Calu3 (cell line): ENCODE measurements at regions of chr11 and their contacts with region 1.

Region 1: GRCh38 chr11:34791780-34792542 is 124.2 kb downstream of the APIP start:
- DNase-seq: no peak
- H3K4me3 Mint-ChIP-seq: no peak overlapping the region
- H3K27ac Mint-ChIP-seq: peak overlapping the region; percentile 66
- H3K4me1 Mint-ChIP-seq: peaks cover 67% of the 10 kb centered on the region
- H3K27me3 Mint-ChIP-seq: no peaks in the 10 kb centered on the region
- CTCF ChIP-seq: peak; percentile 24

Region 2: GRCh38 chr11:34825670-34826383 is 33.9 kb after region 1 on chr11:
- CTCF ChIA-PET with region 1: interaction called, 21 read pairs
- intact Hi-C with region 1: loop called (anchors 1 kb)
- DNase-seq: peak; percentile 90
- H3K4me3 Mint-ChIP-seq: peak overlapping the region; percentile 47
- H3K27ac Mint-ChIP-seq: peak overlapping the region; percentile 96
- H3K4me1 Mint-ChIP-seq: peaks cover 68% of the 10 kb centered on the region
- H3K27me3 Mint-ChIP-seq: no peaks in the 10 kb centered on the region
- CTCF ChIP-seq: no peak

Region 3: DNA sequence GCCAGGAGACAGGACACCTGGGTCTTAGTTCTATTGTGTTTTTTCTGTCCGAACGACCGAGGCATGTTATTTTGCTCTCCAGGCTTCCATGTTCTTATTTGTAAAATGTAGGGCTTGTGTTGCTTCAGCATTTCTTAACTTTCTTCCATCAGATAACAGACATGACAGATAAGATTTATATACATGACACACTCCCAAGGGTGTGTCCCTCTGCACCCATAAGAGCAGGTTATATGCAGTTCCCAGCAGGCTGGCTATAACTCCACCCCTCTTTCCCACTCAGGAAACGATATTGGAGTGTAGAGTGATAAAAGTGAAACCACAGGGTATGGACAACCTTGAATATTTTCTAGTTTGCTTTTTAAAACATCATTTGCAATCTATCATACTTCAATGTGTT is 58.4 kb after region 1 on chr11:
- CTCF ChIA-PET with region 1: interaction called, 5 read pairs
- intact Hi-C with region 1: loop called (anchors 5 kb)
- DNase-seq: no peak
- H3K4me3 Mint-ChIP-seq: no peak overlapping the region
- H3K27ac Mint-ChIP-seq: peak overlapping the region; percentile 12
- H3K4me1 Mint-ChIP-seq: peaks cover 46% of the 10 kb centered on the region
- H3K27me3 Mint-ChIP-seq: no peaks in the 10 kb centered on the region
- CTCF ChIP-seq: no peak

Region 4: GRCh38 chr11:34907934-34908593 is 116.1 kb after region 1 on chr11:
- CTCF ChIA-PET with region 1: no interaction called
- intact Hi-C with region 1: no loop called
- DNase-seq: no peak
- H3K4me3 Mint-ChIP-seq: no peak overlapping the region
- H3K27ac Mint-ChIP-seq: no peak overlapping the region
- H3K4me1 Mint-ChIP-seq: peaks cover 14% of the 10 kb centered on the region
- H3K27me3 Mint-ChIP-seq: no peaks in the 10 kb centered on the region
- CTCF ChIP-seq: no peak

Region 5: DNA sequence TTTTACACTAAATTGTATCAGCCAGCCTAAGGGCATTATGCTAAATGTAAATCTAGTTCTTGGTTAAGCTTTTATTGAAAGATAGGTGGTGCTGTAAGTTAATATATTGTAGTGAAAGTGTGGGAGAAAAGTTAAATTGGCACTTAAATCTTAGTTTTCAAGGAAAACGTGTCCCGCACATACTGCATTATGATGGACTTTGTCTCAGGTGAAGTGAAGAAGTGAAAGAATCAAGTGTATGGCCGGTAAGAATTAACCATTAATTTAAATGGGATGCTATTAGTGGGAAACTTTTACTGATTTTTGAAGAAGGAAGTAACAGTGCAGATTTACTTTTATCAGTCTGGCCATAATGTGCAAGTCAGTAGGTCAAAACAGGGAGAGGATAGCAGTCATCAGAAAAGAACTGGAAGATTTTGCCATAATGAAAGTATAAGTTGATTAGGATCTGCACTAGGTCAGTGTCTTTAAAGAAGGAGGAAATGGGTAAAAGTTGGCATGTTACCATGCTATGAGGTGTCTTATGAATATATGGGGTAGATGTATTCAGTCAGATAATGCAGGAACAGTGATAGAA is 206.1 kb after region 1 on chr11:
- CTCF ChIA-PET with region 1: no interaction called
- intact Hi-C with region 1: no loop called
- DNase-seq: no peak
- H3K4me3 Mint-ChIP-seq: peak overlapping the region; percentile 57
- H3K27ac Mint-ChIP-seq: peak overlapping the region; percentile 82
- H3K4me1 Mint-ChIP-seq: peaks cover 23% of the 10 kb centered on the region
- H3K27me3 Mint-ChIP-seq: no peaks in the 10 kb centered on the region
- CTCF ChIP-seq: no peak